ENCODE measurements at regions of chr1 and their contacts with region 1.

Region 1: DNA sequence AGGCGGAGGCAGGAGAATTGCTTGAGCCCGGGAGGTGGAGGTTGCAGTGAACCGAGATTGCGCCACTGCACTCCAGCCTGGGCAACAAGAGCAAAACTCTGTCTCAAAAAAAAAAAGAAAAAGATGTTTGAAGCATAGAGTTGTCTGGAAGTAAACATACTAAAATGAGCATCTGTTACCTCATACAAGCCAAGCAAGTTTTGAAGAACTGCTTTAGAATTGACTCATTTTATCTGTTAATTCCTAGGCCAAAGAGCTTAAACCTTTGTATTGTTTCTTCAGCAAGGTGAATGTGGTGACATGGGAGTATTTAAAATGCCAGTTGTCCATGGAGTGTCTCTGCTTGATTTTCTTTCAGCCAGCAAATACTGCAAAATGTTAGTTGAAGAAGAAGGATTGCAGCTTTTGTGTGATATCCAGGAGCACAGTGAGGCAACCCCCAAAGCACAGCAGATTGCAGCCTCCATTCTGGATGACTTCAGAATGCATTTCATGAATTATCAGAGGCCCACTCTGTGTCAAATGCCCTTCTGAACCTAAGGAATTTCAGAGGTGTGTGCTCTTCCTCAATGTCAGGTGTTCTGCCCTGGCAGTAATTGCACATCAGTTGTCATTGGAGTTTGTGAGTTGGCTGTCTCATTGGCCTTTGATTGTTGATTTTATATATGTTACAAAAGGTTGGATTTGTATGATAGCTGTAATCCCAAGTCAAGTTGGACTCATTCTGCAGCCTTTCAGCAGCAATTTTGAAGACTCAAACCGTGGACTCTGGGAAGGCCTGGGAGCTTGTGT is 28.9 kb downstream of the ECHDC2 start:
- DNase-seq: no peak
- H3K4me3 ChIP-seq: no peak overlapping the region
- H3K27ac ChIP-seq: no peak overlapping the region
- H3K4me1 ChIP-seq: no peaks in the 10 kb centered on the region; a peak in 1 of 7 replicates
- H3K27me3 ChIP-seq: no peaks in the 10 kb centered on the region
- CTCF ChIP-seq: no peak
- EP300 ChIP-seq: no peak
- POLR2A ChIP-seq: no peak
- RAD21 ChIP-seq: no peak

Region 2: DNA sequence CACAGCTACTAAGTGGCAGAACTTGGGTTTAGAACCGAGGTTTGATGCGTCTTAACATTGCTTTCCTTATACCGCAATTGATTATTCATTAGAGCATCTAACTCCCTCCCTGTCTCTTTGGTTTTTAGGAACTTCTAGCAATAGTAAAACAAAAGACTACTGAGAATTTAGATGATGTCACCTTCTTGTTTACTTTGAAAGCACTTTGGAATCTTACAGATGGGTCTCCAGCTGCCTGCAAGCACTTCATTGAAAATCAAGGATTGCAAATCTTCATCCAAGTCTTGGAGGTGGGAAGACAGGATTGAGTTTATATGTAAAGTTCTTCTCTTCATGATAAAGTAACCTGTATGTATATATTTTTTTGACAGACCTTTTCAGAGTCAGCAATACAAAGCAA is 15.1 kb before region 1 on chr1:
- CTCF ChIA-PET with region 1: interaction called, 17 read pairs
- POLR2A ChIA-PET with region 1: no interaction called
- DNase-seq: no peak
- H3K4me3 ChIP-seq: no peak overlapping the region
- H3K27ac ChIP-seq: no peak overlapping the region
- H3K4me1 ChIP-seq: peaks cover 0 to 7% (median 3%) of the 10 kb centered on the region in 4 experiments; a peak in 4 of 7 replicates
- H3K27me3 ChIP-seq: no peaks in the 10 kb centered on the region
- CTCF ChIP-seq: no peak
- EP300 ChIP-seq: no peak
- POLR2A ChIP-seq: no peak
- RAD21 ChIP-seq: no peak

Region 3: DNA sequence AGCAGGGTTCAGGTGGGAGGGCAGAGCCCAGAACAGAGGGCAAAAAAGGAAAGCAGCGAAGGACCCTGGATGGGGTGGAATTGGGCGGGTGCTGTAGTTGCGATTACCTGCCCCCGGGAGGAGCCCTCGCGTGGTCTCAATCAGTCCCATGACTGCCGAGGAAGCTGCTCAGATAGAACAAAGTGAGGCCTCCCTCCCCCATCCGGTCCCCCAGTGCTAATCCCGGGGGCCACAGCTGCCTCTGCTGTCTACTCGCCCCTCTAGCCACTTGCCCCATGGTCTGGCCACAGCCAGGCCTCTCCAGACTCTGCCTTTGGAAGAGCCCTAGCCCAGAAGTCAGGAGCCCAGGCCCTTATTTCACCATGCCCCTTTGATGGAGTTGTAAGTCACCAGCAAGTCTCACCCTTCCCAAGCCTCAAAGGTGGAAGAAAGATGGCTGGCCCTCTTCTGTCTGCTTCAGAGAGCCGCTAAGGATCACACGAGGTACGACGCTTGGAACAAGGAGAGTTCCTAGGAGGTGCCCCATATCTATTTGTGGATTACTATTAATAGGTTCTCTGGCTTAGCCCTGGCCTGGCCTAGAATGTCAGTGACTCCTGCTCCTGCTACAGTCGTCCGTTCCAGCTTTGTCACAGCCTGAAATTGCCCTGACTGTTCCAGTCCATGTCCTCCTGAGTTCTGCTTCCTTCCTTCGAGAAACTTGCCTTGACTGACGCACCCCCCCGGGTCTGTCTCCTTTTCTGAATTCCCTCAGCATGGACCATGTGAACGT is 12.5 kb after region 1 on chr1:
- CTCF ChIA-PET with region 1: interaction called, 32 read pairs
- POLR2A ChIA-PET with region 1: interaction called, 5 read pairs
- DNase-seq: peak; percentile 38 to 81
- H3K4me3 ChIP-seq: no peak overlapping the region
- H3K27ac ChIP-seq: no peak overlapping the region
- H3K4me1 ChIP-seq: peaks cover 0 to 10% (median 3%) of the 10 kb centered on the region in 4 experiments; a peak in 5 of 7 replicates
- H3K27me3 ChIP-seq: no peaks in the 10 kb centered on the region
- CTCF ChIP-seq: peak; percentile 68 to 77 (median 72)
- EP300 ChIP-seq: no peak
- POLR2A ChIP-seq: no peak
- RAD21 ChIP-seq: peak; percentile 67 to 70

Region 4: DNA sequence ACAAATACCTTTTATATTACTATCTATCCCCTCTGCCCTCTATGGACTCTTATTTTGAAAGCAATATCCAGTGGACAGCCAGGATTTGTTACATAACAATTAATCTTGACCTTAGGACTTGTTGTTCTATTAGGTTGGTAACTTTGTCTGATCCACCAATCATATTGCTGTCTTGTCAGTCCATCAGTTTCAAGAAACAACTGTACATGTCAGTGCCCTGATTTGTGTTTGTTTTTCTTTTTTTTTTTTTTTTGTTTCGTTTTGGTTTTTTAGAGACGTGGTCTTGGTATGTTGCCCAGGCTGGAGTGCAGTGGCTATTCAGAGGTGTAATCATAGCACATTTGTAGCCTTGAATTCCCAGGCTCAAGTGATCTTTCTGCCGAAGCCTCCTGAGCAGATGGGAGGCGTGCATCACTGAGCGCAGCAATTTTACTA is 33.0 kb after region 1 on chr1:
- CTCF ChIA-PET with region 1: no interaction called
- POLR2A ChIA-PET with region 1: no interaction called
- DNase-seq: no peak
- H3K4me3 ChIP-seq: no peak overlapping the region
- H3K27ac ChIP-seq: no peak overlapping the region
- H3K4me1 ChIP-seq: peaks cover 0 to 3% (median 2%) of the 10 kb centered on the region in 4 experiments; a peak in 4 of 7 replicates
- H3K27me3 ChIP-seq: peaks cover 9 to 48% (median 37%) of the 10 kb centered on the region in 4 experiments
- CTCF ChIP-seq: no peak
- EP300 ChIP-seq: no peak
- POLR2A ChIP-seq: no peak
- RAD21 ChIP-seq: no peak